ENCODE measurements at regions of chr1 and their contacts with region 1.

Region 1: DNA sequence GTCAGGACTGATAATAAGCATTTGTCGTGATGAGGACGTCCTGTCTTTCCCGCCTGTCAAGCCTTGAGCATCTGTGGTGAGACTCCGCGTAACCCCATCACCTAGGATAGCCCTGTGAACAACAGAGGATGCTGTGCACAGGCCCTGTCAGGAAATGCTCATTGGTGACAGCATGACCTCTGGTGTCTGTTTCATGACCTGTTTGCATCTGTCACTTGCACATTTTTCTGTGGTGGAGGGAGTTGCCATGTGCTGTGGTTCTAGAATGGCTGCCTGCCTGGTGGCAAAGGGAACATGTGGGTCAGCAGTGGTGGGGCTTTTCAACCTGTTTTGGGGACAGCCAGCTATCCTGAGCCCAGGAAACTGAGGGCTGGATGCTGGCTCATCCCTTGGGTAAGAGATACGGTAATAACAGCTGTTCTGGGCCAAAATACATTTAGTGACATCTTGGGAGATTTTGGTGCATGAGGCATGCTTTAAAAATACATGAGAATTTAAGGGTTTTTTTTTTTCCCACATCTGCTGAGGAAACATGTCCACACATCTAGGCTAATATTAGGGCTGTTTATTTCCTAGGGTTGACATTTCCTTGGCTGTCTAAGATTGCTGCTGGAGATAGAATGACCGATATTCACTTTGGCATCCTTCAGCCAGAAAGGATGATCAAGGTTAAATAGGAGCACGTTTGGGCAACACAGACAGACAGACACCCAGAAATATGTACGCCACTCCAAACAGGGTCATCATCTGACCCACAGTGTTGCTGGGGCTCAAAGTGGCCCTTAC is 52.9 kb downstream of the KCNC4 start:
- DNase-seq: peak in 1 of 2 donors; percentile 21
- ATAC-seq: peak in 7 of 8 donors; percentile 29 to 73 (median 48)
- H3K4me3 ChIP-seq: no peak overlapping the region
- H3K27ac ChIP-seq: peak overlapping the region in 6 of 10 donors; percentile 29 to 56 (median 53)
- H3K4me1 ChIP-seq: peaks cover 0 to 35% (median 19%) of the 10 kb centered on the region in 9 donors
- H3K27me3 ChIP-seq: no peaks in the 10 kb centered on the region
- CTCF ChIP-seq: peak in 1 of 9 donors; percentile 11

Region 2: DNA sequence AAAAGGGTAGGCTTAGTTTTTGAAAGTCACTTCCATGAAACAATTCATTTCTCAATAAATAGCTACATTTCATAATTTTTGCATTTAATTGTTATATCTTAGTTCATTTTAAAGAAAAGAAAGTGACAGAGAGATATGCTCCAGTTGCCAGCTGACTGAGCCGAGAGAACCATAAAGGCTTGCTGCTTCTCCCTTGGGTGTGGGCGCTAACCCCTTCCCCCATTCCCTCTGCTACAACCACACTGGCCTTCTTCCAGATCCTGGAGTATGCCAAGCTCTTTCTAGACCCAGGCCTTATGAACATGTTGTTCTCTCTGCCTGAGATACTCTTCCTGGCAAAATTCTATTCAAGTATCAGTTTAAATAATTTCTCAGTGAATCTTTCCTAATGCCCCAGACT is 877.6 kb before region 1 on chr1:
- intact Hi-C with region 1: no loop called
- DNase-seq: peak; percentile 12 to 70
- ATAC-seq: peak in 7 of 8 donors; percentile 72 to 90 (median 79)
- H3K4me3 ChIP-seq: no peak overlapping the region
- H3K27ac ChIP-seq: peak overlapping the region; percentile 38 to 96 (median 71)
- H3K4me1 ChIP-seq: peaks cover 15 to 97% (median 82%) of the 10 kb centered on the region in 9 donors
- H3K27me3 ChIP-seq: no peaks in the 10 kb centered on the region
- CTCF ChIP-seq: no peak

Region 3: GRCh38 chr1:110224240-110224995 is 38.6 kb before region 1 on chr1:
- intact Hi-C with region 1: loop called in 3 of 10 experiments (anchors 5 to 10 kb)
- DNase-seq: no peak
- ATAC-seq: no peak
- H3K4me3 ChIP-seq: no peak overlapping the region
- H3K27ac ChIP-seq: no peak overlapping the region
- H3K4me1 ChIP-seq: no peaks in the 10 kb centered on the region
- H3K27me3 ChIP-seq: no peaks in the 10 kb centered on the region
- CTCF ChIP-seq: no peak

Region 4: GRCh38 chr1:110319332-110320152 is 56.5 kb after region 1 on chr1:
- intact Hi-C with region 1: no loop called
- DNase-seq: no peak
- ATAC-seq: no peak
- H3K4me3 ChIP-seq: no peak overlapping the region
- H3K27ac ChIP-seq: no peak overlapping the region
- H3K4me1 ChIP-seq: no peaks in the 10 kb centered on the region
- H3K27me3 ChIP-seq: no peaks in the 10 kb centered on the region
- CTCF ChIP-seq: no peak

Measured in heart right ventricle (tissue), 16 donors.